ENCODE measurements at regions of chrX and their contacts with region 1.

Region 1: GRCh38 chrX:21839334-21840192 is at the start of gene MBTPS2:
- DNase-seq: peak; percentile 63 to 82 (median 76)
- H3K4me3 ChIP-seq: peak within 1 kb of the TSS; percentile 39 to 81 (median 66)
- H3K27ac ChIP-seq: peak within 1 kb of the TSS in 57 of 59 donors; percentile 14 to 88 (median 78)
- H3K27me3 ChIP-seq: peaks cover 0 to 40% (median 4%) of the 10 kb centered on the region in 45 donors
- CTCF ChIP-seq: peak in 33 of 56 donors; percentile 2 to 50 (median 24)
- total RNA-seq, gene MBTPS2: 10.1 to 26.6 (median 18.5) TPM

Region 2: DNA sequence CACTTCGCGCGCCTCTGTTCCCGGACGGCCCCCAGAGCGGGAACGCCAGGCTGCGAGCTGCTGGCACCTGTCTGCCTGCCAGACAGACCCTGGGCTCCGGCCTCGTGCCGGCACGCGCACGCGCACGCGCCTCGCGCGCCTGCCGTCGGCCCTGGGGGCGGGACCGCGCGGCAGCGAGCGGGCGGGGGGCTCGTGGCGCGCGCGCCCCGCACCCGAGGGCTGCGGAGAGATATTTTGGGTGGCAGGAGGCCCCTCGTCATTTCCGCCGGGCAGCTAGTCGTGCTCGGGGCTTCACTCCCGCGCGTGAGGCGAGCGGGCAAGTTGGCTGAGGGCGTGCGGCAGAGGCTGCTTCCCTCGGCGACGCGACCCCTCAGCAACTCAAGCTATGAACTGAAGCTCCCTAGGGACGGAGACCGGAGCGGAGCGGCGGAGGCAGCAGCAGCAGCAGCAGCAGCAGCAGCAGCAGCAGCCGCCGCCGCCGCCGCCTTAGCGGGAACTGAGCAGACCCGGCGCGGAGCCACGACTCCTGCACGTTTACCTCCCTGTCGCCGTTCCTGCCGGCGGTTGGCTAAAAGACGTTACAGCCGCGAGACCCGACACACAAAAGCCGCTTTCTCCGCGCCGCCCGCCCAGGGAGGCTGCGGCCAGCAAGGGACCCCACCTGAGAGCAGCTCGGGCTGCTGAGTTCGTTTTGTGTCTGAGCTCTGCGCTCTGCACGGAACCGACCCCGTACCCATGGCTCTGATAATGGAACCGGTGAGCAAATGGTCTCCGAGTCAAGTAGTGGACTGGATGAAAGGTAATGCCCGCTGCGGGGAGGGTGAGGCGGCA is 465.2 kb before region 1 on chrX and contains the start of gene CNKSR2:
- intact Hi-C with region 1: loop called in 1 of 2 experiments (anchors 10 kb)
- DNase-seq: peak in 7 of 10 donors; percentile 29 to 76 (median 55)
- H3K4me3 ChIP-seq: peak within 1 kb of the TSS; percentile 20 to 75 (median 61)
- H3K27ac ChIP-seq: peak within 1 kb of the TSS in 54 of 59 donors; percentile 20 to 88 (median 76)
- H3K27me3 ChIP-seq: peaks cover 0 to 81% (median 29%) of the 10 kb centered on the region in 45 donors
- CTCF ChIP-seq: no peak
- total RNA-seq, gene CNKSR2: 61.4 to 226 (median 160) TPM

Region 3: GRCh38 chrX:21745756-21746155 is 93.8 kb before region 1 on chrX:
- intact Hi-C with region 1: loop called in 1 of 2 experiments (anchors 5 kb)
- DNase-seq: peak in 5 of 10 donors; percentile 29 to 66 (median 41)
- H3K4me3 ChIP-seq: no peak overlapping the region
- H3K27ac ChIP-seq: no peak overlapping the region
- H3K27me3 ChIP-seq: peaks cover 0 to 95% (median 38%) of the 10 kb centered on the region in 45 donors
- CTCF ChIP-seq: peak in 55 of 56 donors; percentile 28 to 70 (median 53)

Measured in dorsolateral prefrontal cortex (tissue), 120 donors.